Activated naive CD4-positive, alpha-beta T cell treated with anti-CD3 and anti-CD28 coated beads, Interleukin-2, amount 10 ng/mL, durations not matched to agents 7 days and 5 days (primary cell): ENCODE measurements at regions of chr14 and their contacts with region 1.

Region 1: GRCh38 chr14:104768437-104769323 is 15.7 kb downstream of the SIVA1 start:
- DNase-seq: peak; percentile 94
- H3K4me3 Mint-ChIP-seq: no peak overlapping the region
- H3K27ac Mint-ChIP-seq: no peak overlapping the region
- H3K4me1 Mint-ChIP-seq: peaks cover 4% of the 10 kb centered on the region
- H3K27me3 Mint-ChIP-seq: no peaks in the 10 kb centered on the region

Region 2: GRCh38 chr14:104586832-104587620 is 181.7 kb before region 1 on chr14:
- CTCF ChIA-PET with region 1: no interaction called
- DNase-seq: no peak
- H3K4me3 Mint-ChIP-seq: no peak overlapping the region
- H3K27ac Mint-ChIP-seq: no peak overlapping the region
- H3K4me1 Mint-ChIP-seq: no peaks in the 10 kb centered on the region
- H3K27me3 Mint-ChIP-seq: peaks cover 7% of the 10 kb centered on the region

Region 3: GRCh38 chr14:104752735-104753531 is 15.7 kb before region 1 on chr14 and contains the start of gene SIVA1:
- CTCF ChIA-PET with region 1: interaction called, 13 read pairs
- DNase-seq: peak; percentile 100
- H3K4me3 Mint-ChIP-seq: peak within 1 kb of the TSS; percentile 78
- H3K27ac Mint-ChIP-seq: peak within 1 kb of the TSS; percentile 93
- H3K4me1 Mint-ChIP-seq: peaks cover 45% of the 10 kb centered on the region
- H3K27me3 Mint-ChIP-seq: peaks cover 8% of the 10 kb centered on the region

Region 4: DNA sequence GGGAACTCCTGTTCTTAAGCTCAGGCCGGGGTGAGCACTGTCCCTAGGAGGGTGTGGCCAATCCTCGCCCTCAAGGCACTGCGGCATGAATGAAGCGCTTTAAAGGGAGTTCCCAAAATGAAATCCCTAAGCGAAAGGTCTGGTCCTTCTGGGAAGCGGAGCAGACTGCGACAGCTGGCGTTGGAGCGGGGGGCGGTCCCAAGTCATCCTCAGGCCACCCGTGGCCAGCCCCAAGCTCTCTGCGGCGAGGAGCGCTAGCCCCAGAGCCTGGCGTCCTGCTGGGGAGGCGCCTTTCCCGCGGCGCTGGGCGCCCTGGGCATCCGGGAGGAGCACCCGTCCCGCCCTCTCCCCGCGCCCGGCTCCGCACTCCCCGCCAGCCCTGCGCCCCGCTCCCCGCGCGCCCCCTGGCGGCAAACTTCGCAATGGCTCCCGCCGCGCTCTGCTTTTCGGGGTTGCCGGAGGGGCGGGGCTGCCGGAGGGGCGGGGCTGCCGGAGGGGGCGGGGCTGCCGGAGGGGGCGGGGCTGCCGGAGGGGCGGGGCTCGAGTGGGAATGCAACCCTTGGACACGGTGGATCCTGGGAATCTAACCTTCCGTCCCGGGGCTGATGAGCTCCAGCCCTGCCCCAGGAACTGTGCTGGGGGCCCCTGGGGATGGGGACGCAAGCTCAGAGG is 57.6 kb after region 1 on chr14:
- CTCF ChIA-PET with region 1: interaction called, 21 read pairs
- DNase-seq: peak; percentile 95
- H3K4me3 Mint-ChIP-seq: peak overlapping the region; percentile 75
- H3K27ac Mint-ChIP-seq: no peak overlapping the region
- H3K4me1 Mint-ChIP-seq: peaks cover 24% of the 10 kb centered on the region
- H3K27me3 Mint-ChIP-seq: peaks cover 63% of the 10 kb centered on the region

Region 5: DNA sequence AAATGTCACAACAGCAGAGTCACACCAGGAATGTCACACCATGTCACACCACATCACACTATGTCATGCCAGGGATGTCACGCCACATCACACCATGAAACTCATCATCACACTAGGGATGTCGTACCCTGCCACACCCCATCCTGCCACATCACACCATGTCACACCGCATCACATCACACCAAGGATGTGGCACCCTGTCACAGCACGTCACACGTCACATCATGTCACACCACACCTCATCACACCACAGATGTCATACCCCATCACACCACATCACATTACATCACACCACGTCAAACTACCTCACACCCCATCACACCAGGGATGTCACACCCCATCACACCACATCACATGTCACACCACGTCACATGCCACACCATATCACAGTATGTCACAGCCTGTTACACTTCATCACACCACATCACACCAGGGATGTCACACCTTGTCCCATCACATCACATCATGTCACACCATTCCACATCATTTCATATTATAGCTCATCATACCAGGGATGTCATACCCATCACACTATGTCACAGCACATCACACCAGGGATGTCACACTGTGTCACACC is 848.6 kb after region 1 on chr14:
- CTCF ChIA-PET with region 1: no interaction called
- DNase-seq: no peak
- H3K4me3 Mint-ChIP-seq: no peak overlapping the region
- H3K27ac Mint-ChIP-seq: no peak overlapping the region
- H3K4me1 Mint-ChIP-seq: no peaks in the 10 kb centered on the region
- H3K27me3 Mint-ChIP-seq: no peaks in the 10 kb centered on the region